ENCODE measurements at regions of chr10 and their contacts with region 1.

Region 1: GRCh38 chr10:29590915-29591650 is 43.7 kb downstream of the SVIL start:
- DNase-seq: no peak
- H3K4me3 ChIP-seq: no peak overlapping the region
- CTCF ChIP-seq: no peak

Region 2: DNA sequence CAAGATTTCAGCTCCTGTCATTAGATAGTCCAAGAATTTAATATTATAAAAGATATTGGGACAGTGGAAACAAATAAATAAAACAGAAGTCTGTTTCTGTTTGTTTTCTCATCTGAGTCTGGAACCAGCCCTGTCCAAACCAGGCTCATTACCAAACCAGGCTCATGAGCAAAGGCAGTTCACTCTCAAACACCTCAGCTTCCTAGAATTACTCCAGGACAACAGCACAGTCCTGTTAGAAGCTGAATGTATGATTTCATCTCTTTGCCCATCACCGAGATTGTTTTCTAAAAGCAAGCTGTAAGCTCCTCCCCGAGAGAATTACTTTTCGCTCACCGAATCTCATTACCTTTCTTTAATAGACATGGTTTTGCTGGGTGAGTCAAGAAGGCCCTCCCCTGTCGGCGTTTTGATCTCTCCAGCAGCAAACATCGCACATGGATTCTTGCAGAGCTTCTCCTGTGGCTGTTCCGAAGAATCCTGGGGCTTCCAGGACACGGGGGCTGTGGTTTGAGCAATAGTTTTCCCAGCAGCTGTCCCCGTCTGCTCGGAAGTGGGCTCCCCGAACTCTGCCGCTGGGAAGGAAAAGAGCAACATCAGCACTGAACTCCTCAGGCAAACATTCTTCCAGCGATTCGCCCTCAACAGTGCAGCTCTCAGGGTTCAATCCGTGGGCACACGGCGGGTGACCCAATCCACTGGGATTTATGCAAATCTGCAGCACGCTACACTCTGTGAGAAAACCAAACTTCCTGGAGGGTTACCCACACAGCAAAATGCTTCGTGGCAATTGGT is 68.8 kb before region 1 on chr10:
- in situ Hi-C with region 1: loop called (anchors 5 kb)
- DNase-seq: peak; percentile 19
- H3K4me3 ChIP-seq: no peak overlapping the region
- CTCF ChIP-seq: no peak

Region 3: GRCh38 chr10:29555746-29556481 is 35.2 kb before region 1 on chr10:
- in situ Hi-C with region 1: loop called (anchors 5 kb)
- DNase-seq: peak; percentile 69
- H3K4me3 ChIP-seq: no peak overlapping the region
- CTCF ChIP-seq: no peak